ENCODE measurements at regions of chr12 and their contacts with region 1.

Region 1: DNA sequence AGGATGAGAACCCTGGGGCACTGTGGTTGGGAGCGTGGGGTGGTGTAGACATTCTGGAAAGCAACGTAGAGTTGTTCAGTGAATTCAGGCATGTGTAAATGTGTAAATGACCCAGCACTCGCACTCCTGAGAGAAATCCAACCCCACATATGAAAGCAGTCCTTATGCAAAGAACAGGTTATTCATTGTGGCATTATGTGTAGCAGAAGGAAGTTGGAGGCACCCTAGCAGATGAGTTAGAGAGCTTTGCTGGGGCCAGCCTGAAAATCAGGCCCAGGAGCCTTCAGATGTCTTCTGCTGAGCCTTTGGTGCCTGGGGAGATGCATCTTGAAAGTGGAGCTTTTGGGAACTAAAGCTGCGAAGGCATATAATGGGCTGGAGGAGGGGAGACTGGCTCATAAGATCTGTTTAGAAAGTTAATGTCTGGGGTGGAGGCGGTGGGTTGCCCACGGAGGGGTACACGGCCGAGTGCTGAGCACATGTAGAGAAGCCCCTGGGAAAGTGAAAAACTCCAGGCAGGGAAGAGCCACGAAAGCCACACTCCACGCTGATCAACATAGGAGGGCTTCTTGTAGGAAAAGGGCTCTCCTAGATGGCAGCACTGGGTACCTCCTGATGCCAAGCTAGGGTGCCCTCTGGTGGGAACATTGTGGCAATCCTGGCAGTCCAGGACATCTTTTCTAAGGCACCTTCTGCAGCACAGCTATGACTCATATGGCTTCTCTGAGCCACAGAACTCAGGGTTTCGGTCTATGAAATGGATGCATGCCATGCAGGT is 6.0 kb upstream of the KRT83 start:
- DNase-seq: peak; percentile 88
- H3K4me3 Mint-ChIP-seq: no peak overlapping the region
- H3K27ac Mint-ChIP-seq: no peak overlapping the region
- H3K4me1 Mint-ChIP-seq: peaks cover 10% of the 10 kb centered on the region
- H3K27me3 Mint-ChIP-seq: peaks cover 7% of the 10 kb centered on the region

Region 2: DNA sequence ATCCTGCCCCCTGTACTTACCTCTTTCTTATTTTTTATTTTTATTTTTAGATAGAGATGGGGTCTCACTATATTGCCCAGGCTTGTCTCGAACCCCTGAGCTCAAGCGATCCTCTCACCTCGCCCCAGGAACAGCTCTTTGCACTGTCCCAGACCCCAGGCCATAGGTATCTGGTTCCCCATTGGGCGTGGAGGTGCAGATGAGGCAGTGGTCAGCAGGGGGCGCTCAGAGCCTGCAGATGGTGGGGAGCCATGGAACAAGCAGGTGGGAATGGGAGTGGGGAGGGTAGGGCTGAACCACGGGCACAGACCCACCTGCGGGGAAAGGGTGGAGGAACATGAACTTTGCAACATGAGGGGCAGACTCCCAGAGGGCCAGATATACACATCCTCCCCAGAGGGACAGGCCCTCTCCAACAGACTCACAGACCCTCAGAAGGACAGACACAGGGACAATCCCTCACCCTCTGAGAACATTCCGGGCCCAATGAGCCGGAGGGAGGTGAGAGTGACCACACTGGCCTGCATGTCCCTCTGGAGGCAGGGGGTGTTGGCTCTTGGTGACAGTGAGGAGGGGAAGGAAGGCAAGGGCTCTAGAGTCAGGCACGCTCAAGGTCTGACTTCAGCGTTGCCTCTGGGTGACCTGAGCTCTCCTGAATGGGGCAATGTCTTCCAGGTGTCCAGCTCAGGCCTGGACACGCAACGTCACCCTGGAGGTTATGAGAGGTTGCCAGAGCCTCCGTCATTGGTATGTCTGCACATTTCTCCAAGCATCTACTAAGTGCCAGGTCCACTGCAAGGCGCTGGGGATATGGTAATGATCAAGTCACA is 170.3 kb before region 1 on chr12:
- CTCF ChIA-PET with region 1: interaction called, 55 read pairs
- POLR2A ChIA-PET with region 1: no interaction called
- intact Hi-C with region 1: loop called (anchors 1 kb)
- DNase-seq: peak; percentile 81
- H3K4me3 Mint-ChIP-seq: no peak overlapping the region
- H3K27ac Mint-ChIP-seq: no peak overlapping the region
- H3K4me1 Mint-ChIP-seq: peaks cover 28% of the 10 kb centered on the region
- H3K27me3 Mint-ChIP-seq: no peaks in the 10 kb centered on the region

Region 3: DNA sequence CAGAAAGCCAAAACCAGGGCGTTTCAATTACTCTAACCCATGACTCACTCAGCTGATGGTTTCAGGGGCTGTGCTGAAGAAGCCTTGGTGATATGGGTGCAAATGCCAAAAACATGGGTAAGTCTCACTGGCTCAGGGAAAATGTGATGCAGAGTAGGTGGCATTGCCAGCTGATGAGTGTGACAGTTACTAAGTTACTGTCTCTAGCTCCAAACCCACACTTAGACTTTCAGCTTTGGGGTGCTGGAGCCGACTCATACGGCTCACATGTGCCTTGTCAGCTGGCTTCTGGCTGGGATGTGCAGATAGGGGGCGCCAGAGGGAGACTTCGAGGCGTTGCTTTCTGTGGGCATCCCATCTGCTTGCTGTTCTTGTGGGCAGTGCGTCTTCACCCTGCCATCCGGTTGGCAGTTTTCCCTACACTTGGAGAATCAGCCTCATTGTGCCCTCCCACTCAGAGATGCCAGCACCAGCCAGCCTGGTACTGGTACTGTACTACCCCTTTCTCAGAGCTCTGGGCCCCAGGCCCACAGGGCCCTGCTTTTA is 105.3 kb before region 1 on chr12:
- CTCF ChIA-PET with region 1: interaction called, 20 read pairs
- POLR2A ChIA-PET with region 1: no interaction called
- intact Hi-C with region 1: loop called (anchors 1 kb)
- DNase-seq: peak; percentile 93
- H3K4me3 Mint-ChIP-seq: no peak overlapping the region
- H3K27ac Mint-ChIP-seq: peak overlapping the region; percentile 26
- H3K4me1 Mint-ChIP-seq: peaks cover 16% of the 10 kb centered on the region
- H3K27me3 Mint-ChIP-seq: peaks cover 37% of the 10 kb centered on the region

Region 4: GRCh38 chr12:52307836-52308805 is 19.1 kb before region 1 on chr12:
- CTCF ChIA-PET with region 1: interaction called, 46 read pairs
- POLR2A ChIA-PET with region 1: no interaction called
- intact Hi-C with region 1: no loop called
- DNase-seq: peak; percentile 62
- H3K4me3 Mint-ChIP-seq: peak overlapping the region; percentile 47
- H3K27ac Mint-ChIP-seq: no peak overlapping the region
- H3K4me1 Mint-ChIP-seq: peaks cover 16% of the 10 kb centered on the region
- H3K27me3 Mint-ChIP-seq: peaks cover 50% of the 10 kb centered on the region

Region 5: GRCh38 chr12:52313926-52314325 is 13.3 kb before region 1 on chr12:
- CTCF ChIA-PET with region 1: interaction called, 46 read pairs
- POLR2A ChIA-PET with region 1: no interaction called
- intact Hi-C with region 1: no loop called
- DNase-seq: no peak
- H3K4me3 Mint-ChIP-seq: no peak overlapping the region
- H3K27ac Mint-ChIP-seq: no peak overlapping the region
- H3K4me1 Mint-ChIP-seq: peaks cover 1% of the 10 kb centered on the region
- H3K27me3 Mint-ChIP-seq: peaks cover 36% of the 10 kb centered on the region

Region 6: GRCh38 chr12:52338241-52338960 is 11.2 kb after region 1 on chr12:
- CTCF ChIA-PET with region 1: interaction called, 24 read pairs
- POLR2A ChIA-PET with region 1: no interaction called
- intact Hi-C with region 1: no loop called
- DNase-seq: no peak
- H3K4me3 Mint-ChIP-seq: no peak overlapping the region
- H3K27ac Mint-ChIP-seq: no peak overlapping the region
- H3K4me1 Mint-ChIP-seq: peaks cover 7% of the 10 kb centered on the region
- H3K27me3 Mint-ChIP-seq: peaks cover 6% of the 10 kb centered on the region

Region 7: GRCh38 chr12:52398176-52398829 is 71.1 kb after region 1 on chr12:
- CTCF ChIA-PET with region 1: no interaction called
- POLR2A ChIA-PET with region 1: no interaction called
- intact Hi-C with region 1: no loop called
- DNase-seq: peak; percentile 11
- H3K4me3 Mint-ChIP-seq: no peak overlapping the region
- H3K27ac Mint-ChIP-seq: no peak overlapping the region
- H3K4me1 Mint-ChIP-seq: peaks cover 2% of the 10 kb centered on the region
- H3K27me3 Mint-ChIP-seq: peaks cover 4% of the 10 kb centered on the region